ENCODE measurements at regions of chr15 and their contacts with region 1.

Region 1: DNA sequence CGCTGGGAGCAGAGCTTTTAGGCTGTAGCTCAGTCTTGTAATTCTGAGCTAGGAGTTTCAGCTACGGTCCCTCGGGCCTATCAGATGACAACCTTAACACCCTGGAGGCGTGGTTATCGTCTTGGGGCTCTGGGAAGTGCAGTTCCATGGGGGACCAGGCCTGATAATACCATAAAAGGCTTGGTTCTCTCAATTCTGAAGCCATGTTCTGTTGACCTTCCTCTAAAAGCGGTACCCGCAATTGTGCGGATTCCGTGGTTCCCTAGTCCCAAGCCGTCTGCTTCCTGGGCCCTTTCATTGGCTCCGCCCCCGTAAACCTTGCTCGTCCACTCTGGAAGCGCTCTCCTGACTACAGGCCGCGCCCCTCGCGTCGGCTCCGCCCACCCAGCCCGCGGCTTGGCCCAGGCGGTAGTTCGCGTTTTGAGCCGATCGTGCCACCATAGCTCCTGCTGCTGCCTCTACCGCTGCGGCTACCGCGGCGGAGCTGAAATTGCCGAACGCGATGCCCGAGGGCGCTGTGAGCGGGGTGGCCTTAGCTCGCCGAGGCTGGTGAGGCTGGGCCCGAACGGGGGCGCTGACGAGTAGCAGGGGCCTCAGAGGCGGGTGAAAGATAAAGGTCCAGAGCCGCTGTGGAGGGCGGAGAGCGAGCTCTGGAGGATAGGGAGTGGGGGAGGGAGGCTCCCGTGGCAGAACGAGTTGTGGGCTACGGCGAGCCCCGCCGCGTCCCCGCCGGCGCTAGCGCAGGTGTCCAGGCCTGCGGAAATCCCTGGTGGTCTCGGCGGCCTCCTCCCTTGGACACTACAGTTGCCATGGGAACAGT is at the start of gene MAPKBP1:
- DNase-seq: peak; percentile 96
- H3K27ac ChIP-seq: peak within 1 kb of the TSS; percentile 94
- CTCF ChIP-seq: peak; percentile 87

Region 2: DNA sequence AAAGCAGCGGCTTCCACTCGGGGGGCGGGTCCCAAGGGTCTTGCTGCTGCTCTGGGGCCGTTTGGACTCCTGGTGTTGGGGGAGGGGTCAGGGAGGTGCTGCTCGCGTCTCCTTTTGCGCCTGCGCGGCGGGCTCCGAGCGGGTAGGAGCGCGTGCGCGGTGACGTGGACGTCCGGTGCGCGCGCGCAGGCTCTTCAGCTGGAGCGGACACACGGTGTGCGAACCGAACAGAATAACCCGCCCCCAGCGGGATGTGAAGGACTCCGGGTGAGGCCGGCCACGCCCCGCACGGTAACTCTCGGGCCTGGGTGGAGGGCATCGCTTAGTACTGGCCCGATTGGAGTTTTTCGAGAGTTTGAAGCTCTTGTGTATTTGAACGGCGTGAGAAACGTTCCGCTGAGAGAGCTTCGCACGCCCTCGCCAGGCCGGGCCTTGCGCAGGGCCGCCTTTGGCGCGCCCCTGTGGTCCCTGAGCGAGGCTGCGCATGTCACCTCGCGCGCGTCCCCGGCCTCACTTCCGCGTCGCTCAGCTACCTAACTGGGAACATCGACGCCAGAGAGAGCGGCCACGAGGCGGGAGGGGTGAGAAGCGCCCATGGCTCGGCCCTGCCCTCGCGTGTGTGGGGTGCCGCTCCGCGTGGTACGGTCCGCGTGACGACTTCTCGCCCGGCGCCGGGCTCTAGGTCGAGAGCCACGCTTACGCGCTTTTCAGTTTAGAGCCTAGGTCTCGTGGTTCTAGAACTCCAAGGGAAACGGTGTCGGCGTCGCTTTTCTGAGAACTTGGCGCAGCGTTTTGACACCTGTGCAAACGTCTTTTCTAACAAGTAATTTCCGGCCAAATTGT is 113.8 kb before region 1 on chr15 and contains the start of gene MGA:
- CTCF ChIA-PET with region 1: no interaction called
- POLR2A ChIA-PET with region 1: no interaction called
- DNase-seq: peak; percentile 97
- H3K27ac ChIP-seq: peak within 1 kb of the TSS; percentile 97
- CTCF ChIP-seq: peak; percentile 30; the same call in 1 of the 2 replicates

Region 3: DNA sequence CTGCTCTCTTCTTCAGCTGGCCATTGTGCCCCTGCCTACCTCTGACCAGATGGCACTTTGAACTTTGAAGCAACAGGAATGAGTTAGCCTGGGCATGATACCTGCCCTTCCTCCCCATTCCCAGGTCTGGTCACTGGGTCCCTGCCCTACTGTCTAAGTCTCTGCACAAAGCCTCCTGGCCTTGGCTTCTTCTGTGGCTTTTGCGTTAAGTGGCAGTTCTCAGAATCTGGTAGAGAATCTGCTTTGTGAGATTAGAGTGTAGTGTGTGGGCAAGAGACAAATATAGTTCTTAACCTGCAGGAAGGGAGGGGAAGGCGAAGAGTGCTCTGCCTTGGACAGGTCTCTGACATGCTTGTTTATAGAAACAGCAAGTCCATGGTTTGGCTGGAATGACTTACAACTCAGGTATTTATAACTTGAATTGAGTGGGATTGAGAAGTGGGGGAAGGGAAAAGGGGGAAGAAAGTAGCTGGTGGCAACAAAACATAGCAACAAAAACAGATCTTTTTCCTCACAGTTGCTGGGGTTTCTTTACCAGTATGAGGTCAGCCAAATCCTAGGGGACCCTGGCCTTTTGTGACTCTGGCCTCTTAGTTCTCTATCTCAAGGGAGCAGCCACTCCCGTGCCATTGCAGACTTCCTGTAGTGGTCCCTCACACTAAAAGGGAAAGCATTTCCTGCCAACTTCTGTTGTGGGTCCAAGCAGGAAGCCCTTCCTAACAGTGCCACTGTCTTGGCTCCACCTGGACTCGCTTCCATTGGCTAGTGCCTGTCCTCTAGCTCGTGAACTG is 16.7 kb after region 1 on chr15:
- CTCF ChIA-PET with region 1: no interaction called
- POLR2A ChIA-PET with region 1: no interaction called
- DNase-seq: peak; percentile 71
- H3K27ac ChIP-seq: peak overlapping the region; percentile 86
- CTCF ChIP-seq: no peak

Region 4: GRCh38 chr15:41806291-41807181 is 32.3 kb after region 1 on chr15:
- CTCF ChIA-PET with region 1: interaction called, 59 read pairs
- POLR2A ChIA-PET with region 1: interaction called, 12 read pairs
- DNase-seq: peak; percentile 98
- H3K27ac ChIP-seq: peak overlapping the region; percentile 97
- CTCF ChIP-seq: no peak; the same call in 1 of the 2 replicates

Region 5: GRCh38 chr15:41811432-41812195 is 37.3 kb after region 1 on chr15:
- CTCF ChIA-PET with region 1: interaction called, 59 read pairs
- POLR2A ChIA-PET with region 1: interaction called, 5 read pairs
- DNase-seq: peak; percentile 79
- H3K27ac ChIP-seq: peak overlapping the region; percentile 64
- CTCF ChIP-seq: peak; percentile 95